BJ (cell line): ENCODE measurements at regions of chr6 and their contacts with region 1.

Region 1: DNA sequence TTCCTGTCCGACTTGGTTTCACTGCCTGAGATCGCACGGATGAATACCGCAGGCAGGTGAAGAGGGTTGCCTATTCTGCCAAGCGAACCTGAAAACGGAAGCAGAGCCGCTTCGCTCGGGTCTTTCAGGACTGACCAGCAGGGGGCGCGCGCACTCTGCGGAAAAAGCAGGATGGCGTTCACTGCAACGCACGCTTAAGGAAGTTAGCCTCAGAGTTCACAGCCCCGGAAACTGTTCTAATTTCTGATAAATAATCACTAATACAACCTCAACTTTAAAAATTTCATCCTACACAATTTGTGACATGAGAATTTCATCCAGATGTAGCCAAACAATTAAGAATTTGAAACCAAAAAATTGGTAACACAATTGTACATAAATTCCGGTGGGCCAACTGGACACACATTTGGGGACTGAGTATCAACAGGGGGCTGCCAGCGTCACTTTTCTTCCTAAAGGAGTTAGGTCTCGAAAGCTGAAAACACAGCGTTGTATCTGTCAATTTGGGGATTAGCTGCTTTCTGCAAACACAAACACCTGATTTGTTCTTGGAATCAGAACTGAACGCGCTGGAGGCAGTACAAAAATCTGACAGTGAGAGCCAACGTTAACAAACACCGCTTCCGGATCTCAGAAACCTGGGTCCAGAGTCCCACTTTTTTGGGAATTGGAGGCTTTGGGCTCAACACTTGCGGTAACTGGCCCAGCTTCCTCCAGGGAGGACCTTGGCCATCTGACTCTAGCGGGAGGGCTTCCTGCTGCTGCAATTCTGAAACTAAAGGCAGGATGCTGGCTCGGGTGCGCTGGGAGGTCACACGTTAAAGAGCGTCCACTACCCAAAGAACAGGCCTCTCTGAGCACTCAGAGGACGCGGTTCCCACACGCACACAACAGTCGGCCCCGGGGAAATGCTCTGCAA is 8.8 kb downstream of the PXDC1 start:
- DNase-seq: no peak
- H3K4me3 ChIP-seq: no peak overlapping the region
- H3K27me3 ChIP-seq: no peaks in the 10 kb centered on the region
- CTCF ChIP-seq: peak; percentile 90

Region 2: DNA sequence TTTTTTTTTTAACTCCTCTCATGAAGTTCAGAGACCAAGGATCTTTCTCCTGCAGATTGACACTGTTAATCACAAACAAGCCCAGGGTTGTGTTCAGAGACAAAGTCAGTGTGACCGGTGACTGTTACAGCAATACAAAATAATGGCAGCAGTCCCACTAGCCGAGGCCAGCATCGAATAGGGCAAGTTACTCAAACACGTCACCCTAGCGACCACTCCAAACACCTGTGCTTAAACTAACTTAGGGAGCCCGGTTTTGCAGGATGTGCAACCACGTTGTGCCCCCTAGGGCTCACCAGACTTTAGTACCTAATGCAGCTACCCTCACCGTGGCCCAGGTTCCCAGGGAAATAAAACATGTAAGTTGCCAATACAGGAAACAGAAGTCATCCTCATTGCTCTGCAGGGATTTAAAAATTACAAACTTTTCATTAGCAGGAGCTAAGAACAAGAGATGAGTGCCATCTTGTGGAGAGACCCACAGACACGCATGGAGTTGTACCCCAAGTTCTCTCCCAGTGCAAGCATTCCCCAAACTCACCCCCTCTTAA is 144.5 kb after region 1 on chr6:
- CTCF ChIA-PET with region 1: interaction called, 78 read pairs
- POLR2A ChIA-PET with region 1: no interaction called
- DNase-seq: no peak
- H3K4me3 ChIP-seq: no peak overlapping the region
- H3K27me3 ChIP-seq: no peaks in the 10 kb centered on the region
- CTCF ChIP-seq: peak; percentile 63

Region 3: DNA sequence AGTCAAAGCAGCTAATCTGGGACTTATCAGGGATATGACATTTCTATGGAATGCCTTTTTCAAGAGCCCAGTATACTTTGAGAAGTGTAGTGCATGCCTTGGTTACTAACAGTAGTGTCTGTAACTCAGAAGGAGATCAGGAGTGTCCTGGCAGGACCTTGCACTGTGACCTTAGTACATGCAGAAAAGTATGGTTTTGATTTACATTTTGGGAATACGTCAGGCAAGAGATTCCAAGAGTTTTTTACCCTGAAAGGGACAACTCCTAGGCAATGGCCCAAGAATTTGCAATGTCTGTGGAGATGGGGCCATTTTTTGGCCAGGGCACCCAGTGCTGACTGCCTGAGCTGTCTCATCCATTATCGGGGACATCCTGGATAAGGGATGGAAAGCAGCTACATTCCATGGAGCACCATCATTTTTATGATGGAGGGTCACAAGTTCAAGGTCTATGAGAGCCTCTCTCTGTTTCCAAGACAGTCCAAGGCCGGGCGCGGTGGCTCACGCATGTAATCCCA is 186.7 kb after region 1 on chr6:
- CTCF ChIA-PET with region 1: interaction called, 25 read pairs
- POLR2A ChIA-PET with region 1: no interaction called
- DNase-seq: peak; percentile 97
- H3K4me3 ChIP-seq: no peak overlapping the region
- H3K27me3 ChIP-seq: no peaks in the 10 kb centered on the region
- CTCF ChIP-seq: no peak

Region 4: GRCh38 chr6:3990692-3991501 is 248.2 kb after region 1 on chr6:
- CTCF ChIA-PET with region 1: interaction called, 12 read pairs
- POLR2A ChIA-PET with region 1: interaction called, 5 read pairs
- DNase-seq: peak; percentile 27
- H3K4me3 ChIP-seq: peak overlapping the region; percentile 9; the same call in 1 of the 2 replicates
- H3K27me3 ChIP-seq: no peaks in the 10 kb centered on the region
- CTCF ChIP-seq: peak; percentile 95

Region 5: DNA sequence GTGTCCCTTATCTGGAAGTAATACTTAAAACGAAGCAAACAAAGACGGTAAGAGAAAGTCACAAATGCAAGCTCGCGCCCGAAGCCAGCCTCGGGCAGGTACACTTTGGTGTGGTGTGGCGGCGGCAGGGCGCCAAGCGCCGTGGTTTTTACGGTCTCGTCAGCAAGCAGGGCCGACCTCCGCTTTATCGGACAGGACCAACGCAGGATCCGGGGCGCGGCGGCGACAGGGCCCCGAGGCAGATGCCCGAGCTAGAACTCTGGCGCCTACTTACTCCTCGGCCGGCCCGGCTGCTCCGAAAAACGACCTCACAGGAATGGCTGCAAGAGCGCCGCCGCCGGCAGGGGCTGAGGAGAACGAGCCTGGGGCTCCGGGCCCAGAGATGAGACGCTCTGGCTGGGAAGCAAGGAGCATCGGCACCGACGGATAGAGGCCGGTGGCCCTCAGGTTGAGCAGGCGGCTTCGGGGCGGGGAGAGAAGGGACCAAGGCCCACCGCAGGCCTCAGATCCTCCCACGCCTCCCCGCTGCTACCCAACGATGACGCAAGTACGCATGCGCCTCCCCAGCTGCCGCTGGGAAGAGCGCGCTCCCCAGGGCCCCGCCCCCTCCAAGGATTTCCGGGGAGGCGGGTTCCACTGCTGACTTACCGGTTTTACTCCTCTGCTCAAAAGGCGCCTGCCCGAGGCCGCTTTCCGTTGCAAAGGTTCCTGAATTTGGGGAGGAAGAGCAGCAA is 275.7 kb after region 1 on chr6:
- CTCF ChIA-PET with region 1: interaction called, 3 read pairs
- POLR2A ChIA-PET with region 1: interaction called, 12 read pairs
- DNase-seq: peak; percentile 68
- H3K4me3 ChIP-seq: peak overlapping the region; percentile 63
- H3K27me3 ChIP-seq: no peaks in the 10 kb centered on the region
- CTCF ChIP-seq: peak; percentile 59